ENCODE measurements at regions of chr7 and their contacts with region 1.

Region 1: DNA sequence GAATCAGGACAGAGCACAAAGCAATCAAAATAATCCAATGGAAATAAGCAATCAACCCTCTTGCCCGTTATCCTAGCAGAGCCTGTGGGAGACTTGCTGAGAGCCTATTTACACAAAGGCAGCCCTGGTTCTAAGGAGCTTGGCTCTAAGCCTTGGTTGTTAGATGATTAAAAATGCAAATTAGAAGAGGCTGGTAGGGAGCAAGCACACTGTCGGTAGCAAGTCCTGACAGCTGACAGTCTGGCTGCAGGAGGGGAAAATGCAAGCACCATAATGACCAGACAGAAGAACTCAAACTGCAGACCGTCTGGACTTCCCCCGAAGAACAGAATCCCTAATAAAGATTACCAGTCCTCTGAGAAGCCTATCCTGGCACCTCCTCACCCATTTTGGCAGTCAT is 131.8 kb upstream of the CTTNBP2 start:
- DNase-seq: no peak
- H3K4me3 ChIP-seq: no peak overlapping the region
- H3K4me3 Mint-ChIP-seq: no peak overlapping the region
- H3K27ac Mint-ChIP-seq: no peak overlapping the region
- H3K4me1 ChIP-seq: no peaks in the 10 kb centered on the region
- H3K4me1 Mint-ChIP-seq: no peaks in the 10 kb centered on the region
- H3K27me3 ChIP-seq: no peaks in the 10 kb centered on the region; the same call in 1 of the 2 replicates
- H3K27me3 Mint-ChIP-seq: peaks cover under 1% of the 10 kb centered on the region
- CTCF ChIP-seq: no peak

Region 2: GRCh38 chr7:118080947-118081346 is 75.9 kb after region 1 on chr7:
- CTCF ChIA-PET with region 1: no interaction called
- POLR2A ChIA-PET with region 1: no interaction called
- intact Hi-C with region 1: loop called (anchors 10 kb)
- DNase-seq: peak; percentile 21 to 38
- H3K4me3 ChIP-seq: no peak overlapping the region
- H3K4me3 Mint-ChIP-seq: peak overlapping the region; percentile 46
- H3K27ac Mint-ChIP-seq: no peak overlapping the region
- H3K4me1 ChIP-seq: no peaks in the 10 kb centered on the region
- H3K4me1 Mint-ChIP-seq: peaks cover 4% of the 10 kb centered on the region
- H3K27me3 ChIP-seq: no peaks in the 10 kb centered on the region
- H3K27me3 Mint-ChIP-seq: peaks cover 10% of the 10 kb centered on the region
- CTCF ChIP-seq: no peak

Measured in Caco-2 (cell line).